Activated naive CD4-positive, alpha-beta T cell treated with anti-CD3 and anti-CD28 coated beads for 36 hours (primary cell): ENCODE measurements at regions of chr1 and their contacts with region 1.

Region 1: DNA sequence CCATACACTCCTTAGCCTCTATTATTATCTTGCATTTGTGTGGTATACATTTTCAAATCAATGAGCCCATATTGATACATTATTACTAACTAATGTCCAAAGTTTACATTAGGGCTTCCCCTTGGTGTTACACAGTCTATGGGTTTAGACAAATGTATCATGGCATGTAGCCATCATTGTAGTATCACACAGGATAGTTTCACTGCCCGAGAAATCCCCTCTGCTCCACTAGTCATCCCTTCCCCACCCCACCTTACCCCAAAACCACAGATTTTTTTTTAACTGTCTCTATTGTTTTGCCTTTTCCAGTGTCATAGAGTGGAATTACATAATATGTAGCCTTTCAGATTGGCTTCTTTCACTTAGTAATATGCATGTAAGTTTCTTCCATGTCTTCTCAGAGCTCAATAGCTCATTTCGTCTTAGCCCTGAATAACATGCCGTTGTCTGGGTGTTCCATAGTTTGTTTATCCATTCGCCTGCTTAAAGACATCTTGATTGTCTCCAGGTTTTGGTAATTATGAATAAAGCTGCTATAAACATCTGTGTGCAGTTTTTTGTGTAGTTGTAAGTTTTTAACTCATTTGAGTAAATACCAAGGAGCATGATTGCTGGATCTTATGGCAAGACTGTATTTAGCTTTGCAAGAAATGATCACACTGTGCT is 86.4 kb upstream of the LYST start:
- DNase-seq: peak; percentile 60
- H3K4me3 Mint-ChIP-seq: no peak overlapping the region
- H3K27ac Mint-ChIP-seq: no peak overlapping the region
- H3K4me1 Mint-ChIP-seq: peaks cover 38% of the 10 kb centered on the region
- H3K27me3 Mint-ChIP-seq: no peaks in the 10 kb centered on the region

Region 2: DNA sequence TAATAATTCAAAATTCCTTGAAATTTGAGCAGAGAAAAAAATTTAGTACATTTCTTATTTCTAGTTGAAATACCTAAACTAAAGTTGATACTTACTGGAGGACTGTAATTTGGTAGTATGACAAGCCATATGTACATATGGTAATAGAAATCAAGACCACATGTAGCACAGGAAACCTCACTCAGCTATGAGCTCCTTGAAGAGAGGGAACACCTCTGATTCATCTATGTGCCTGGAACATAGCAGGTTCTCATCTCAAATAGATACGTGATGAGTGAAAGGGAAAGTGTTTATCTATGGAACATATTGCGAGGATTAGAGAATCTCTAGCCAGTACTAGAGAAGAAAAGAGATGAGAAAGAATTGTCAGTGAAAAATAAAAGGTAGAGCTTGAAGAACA is 255.6 kb before region 1 on chr1:
- CTCF ChIA-PET with region 1: no interaction called
- intact Hi-C with region 1: loop called (anchors 1 kb)
- DNase-seq: peak; percentile 37
- H3K4me3 Mint-ChIP-seq: no peak overlapping the region
- H3K27ac Mint-ChIP-seq: peak overlapping the region; percentile 82
- H3K4me1 Mint-ChIP-seq: peaks cover 18% of the 10 kb centered on the region
- H3K27me3 Mint-ChIP-seq: no peaks in the 10 kb centered on the region

Region 3: DNA sequence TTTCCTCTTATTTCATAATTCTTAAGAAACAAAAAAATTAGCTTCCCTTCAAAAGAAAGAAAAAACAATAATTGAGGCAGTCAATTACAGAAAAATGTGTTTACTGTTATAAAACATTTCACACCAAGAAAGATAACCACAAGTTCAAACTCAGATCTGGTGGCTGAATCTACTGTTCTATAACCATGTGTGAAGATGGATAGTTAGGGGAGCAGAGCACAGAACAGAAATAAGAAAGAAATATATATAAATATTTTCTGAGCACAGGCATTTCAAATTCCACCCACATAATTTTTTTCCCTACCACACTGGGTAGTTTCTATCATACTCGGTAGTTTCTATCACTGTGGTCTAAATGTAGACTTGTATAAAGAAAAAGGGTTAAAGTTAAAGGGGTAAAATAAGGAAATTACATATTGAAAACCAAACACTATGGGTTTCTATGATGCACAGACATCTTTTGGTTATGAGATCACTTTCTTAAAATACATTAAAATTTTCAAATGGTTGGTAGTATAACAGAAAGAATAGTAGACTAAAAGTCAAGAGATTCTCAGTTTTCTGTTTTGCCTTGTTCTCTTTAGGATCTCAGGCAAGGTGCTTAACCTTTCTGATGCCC is 97.2 kb before region 1 on chr1:
- CTCF ChIA-PET with region 1: interaction called, 4 read pairs
- intact Hi-C with region 1: loop called (anchors 2 kb)
- DNase-seq: no peak
- H3K4me3 Mint-ChIP-seq: no peak overlapping the region
- H3K27ac Mint-ChIP-seq: no peak overlapping the region
- H3K4me1 Mint-ChIP-seq: peaks cover 54% of the 10 kb centered on the region
- H3K27me3 Mint-ChIP-seq: no peaks in the 10 kb centered on the region

Region 4: DNA sequence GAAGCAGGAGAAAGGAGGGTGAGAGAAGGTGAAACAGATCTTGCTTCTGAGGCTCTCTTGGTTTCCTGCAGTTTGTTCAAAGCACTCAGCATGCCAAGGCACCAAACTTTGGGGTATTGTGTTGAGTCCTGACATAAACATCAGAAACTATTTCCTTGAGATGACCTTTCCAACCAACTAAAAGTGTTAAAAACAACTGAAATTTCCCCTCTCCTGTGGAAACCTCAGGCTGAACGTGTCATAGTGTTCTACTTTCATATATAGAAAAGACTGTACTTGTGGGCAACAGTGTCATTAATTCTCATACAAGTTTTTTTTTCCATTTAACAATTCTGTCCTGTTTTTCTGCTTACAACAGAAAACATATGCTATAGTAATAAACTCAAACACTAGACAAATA is 80.0 kb before region 1 on chr1:
- CTCF ChIA-PET with region 1: interaction called, 4 read pairs
- intact Hi-C with region 1: loop called (anchors 1 kb)
- DNase-seq: peak; percentile 62
- H3K4me3 Mint-ChIP-seq: peak overlapping the region; percentile 49
- H3K27ac Mint-ChIP-seq: peak overlapping the region; percentile 93
- H3K4me1 Mint-ChIP-seq: peaks cover 68% of the 10 kb centered on the region
- H3K27me3 Mint-ChIP-seq: no peaks in the 10 kb centered on the region

Region 5: GRCh38 chr1:235888119-235888643 is 64.9 kb before region 1 on chr1:
- CTCF ChIA-PET with region 1: interaction called, 6 read pairs
- intact Hi-C with region 1: loop called (anchors 1 kb)
- DNase-seq: peak; percentile 61
- H3K4me3 Mint-ChIP-seq: peak overlapping the region; percentile 16
- H3K27ac Mint-ChIP-seq: peak overlapping the region; percentile 82
- H3K4me1 Mint-ChIP-seq: peaks cover 41% of the 10 kb centered on the region
- H3K27me3 Mint-ChIP-seq: no peaks in the 10 kb centered on the region